PC-9 (cell line): ENCODE measurements at regions of chr9 and their contacts with region 1.

Region 1: GRCh38 chr9:31799953-31800609 is 584.4 kb upstream of the ACO1 start:
- DNase-seq: peak; percentile 2 to 36
- H3K4me3 ChIP-seq: no peak overlapping the region
- H3K27ac ChIP-seq: no peak overlapping the region
- H3K4me1 ChIP-seq: no peaks in the 10 kb centered on the region
- H3K27me3 ChIP-seq: no peaks in the 10 kb centered on the region
- CTCF ChIP-seq: peak; percentile 78

Region 2: DNA sequence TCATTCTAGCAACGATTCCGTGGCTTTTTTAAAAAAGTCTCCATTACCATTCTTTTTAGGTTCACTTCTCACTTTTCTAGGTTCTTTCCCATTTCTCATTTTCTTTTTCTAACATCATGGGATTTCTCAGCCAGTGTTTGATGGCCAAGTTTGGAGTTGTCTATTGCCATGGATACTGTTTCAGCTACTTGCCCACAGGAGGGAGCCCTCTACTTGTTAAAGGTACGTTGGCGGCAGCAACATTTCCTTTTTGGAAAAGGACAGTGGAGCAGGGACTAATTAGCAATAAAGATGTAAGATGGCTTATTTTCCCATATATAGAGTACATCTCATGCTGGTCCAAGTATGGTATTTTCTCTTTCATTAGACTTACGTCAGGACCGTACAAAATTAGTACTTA is 1969.3 kb before region 1 on chr9:
- CTCF ChIA-PET with region 1: no interaction called
- POLR2A ChIA-PET with region 1: no interaction called
- intact Hi-C with region 1: loop called (anchors 2 kb)
- DNase-seq: peak in 1 of 2 experiments; percentile 12
- H3K4me3 ChIP-seq: no peak overlapping the region
- H3K27ac ChIP-seq: no peak overlapping the region
- H3K4me1 ChIP-seq: no peaks in the 10 kb centered on the region
- H3K27me3 ChIP-seq: no peaks in the 10 kb centered on the region
- CTCF ChIP-seq: peak; percentile 67

Region 3: GRCh38 chr9:31119882-31120454 is 680.1 kb before region 1 on chr9:
- CTCF ChIA-PET with region 1: no interaction called
- POLR2A ChIA-PET with region 1: no interaction called
- intact Hi-C with region 1: loop called (anchors 5 kb)
- DNase-seq: peak in 1 of 2 experiments; percentile 4
- H3K4me3 ChIP-seq: no peak overlapping the region
- H3K27ac ChIP-seq: no peak overlapping the region
- H3K4me1 ChIP-seq: no peaks in the 10 kb centered on the region
- H3K27me3 ChIP-seq: no peaks in the 10 kb centered on the region
- CTCF ChIP-seq: peak; percentile 69